ENCODE measurements at regions of chr4 and their contacts with region 1.

Region 1: GRCh38 chr4:165355900-165356300 is 22.9 kb upstream of the CPE start:
- DNase-seq: peak in 1 of 2 experiments; percentile 12
- H3K4me3 ChIP-seq: no peak overlapping the region
- H3K4me3 Mint-ChIP-seq: no peak overlapping the region
- H3K27ac Mint-ChIP-seq: no peak overlapping the region
- H3K4me1 ChIP-seq: no peaks in the 10 kb centered on the region
- H3K4me1 Mint-ChIP-seq: no peaks in the 10 kb centered on the region
- H3K27me3 ChIP-seq: no peaks in the 10 kb centered on the region
- H3K27me3 Mint-ChIP-seq: peaks cover 3% of the 10 kb centered on the region
- CTCF ChIP-seq: peak; percentile 44

Region 2: DNA sequence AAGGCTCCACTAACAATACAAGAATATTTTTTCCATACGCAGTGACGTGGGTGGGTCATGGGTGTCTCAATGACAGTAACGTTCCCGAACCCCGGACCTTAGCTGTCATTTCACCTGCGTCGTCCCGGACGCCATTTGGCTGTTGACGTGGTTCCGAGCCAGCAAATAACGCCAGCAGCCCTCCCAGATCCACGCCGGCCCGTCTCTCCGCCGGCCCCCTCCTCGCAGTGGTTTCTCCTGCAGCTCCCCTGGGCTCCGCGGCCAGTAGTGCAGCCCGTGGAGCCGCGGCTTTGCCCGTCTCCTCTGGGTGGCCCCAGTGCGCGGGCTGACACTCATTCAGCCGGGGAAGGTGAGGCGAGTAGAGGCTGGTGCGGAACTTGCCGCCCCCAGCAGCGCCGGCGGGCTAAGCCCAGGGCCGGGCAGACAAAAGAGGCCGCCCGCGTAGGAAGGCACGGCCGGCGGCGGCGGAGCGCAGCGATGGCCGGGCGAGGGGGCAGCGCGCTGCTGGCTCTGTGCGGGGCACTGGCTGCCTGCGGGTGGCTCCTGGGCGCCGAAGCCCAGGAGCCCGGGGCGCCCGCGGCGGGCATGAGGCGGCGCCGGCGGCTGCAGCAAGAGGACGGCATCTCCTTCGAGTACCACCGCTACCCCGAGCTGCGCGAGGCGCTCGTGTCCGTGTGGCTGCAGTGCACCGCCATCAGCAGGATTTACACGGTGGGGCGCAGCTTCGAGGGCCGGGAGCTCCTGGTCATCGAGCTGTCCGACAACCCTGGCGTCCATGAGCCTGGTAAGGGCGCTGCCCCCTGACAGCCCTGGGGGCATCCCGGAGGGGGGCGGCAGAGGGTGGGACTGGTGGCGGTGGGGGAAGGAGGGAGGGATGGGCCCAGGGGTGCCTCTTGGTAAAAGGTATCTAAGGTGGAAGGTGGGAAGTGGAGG is 23.1 kb after region 1 on chr4 and contains the start of gene CPE:
- CTCF ChIA-PET with region 1: no interaction called
- POLR2A ChIA-PET with region 1: no interaction called
- intact Hi-C with region 1: loop called (anchors 2 kb)
- DNase-seq: peak; percentile 81 to 87
- H3K4me3 ChIP-seq: peak within 1 kb of the TSS; percentile 37
- H3K4me3 Mint-ChIP-seq: peak within 1 kb of the TSS; percentile 87
- H3K27ac Mint-ChIP-seq: no peak within 1 kb of the TSS
- H3K4me1 ChIP-seq: peaks cover 5% of the 10 kb centered on the region
- H3K4me1 Mint-ChIP-seq: peaks cover 7% of the 10 kb centered on the region
- H3K27me3 ChIP-seq: no peaks in the 10 kb centered on the region
- H3K27me3 Mint-ChIP-seq: peaks cover 19% of the 10 kb centered on the region
- CTCF ChIP-seq: peak in 1 of 2 experiments; percentile 73
- total RNA-seq, gene CPE: 4.6 and 5.9 TPM in 2 replicates

Region 3: DNA sequence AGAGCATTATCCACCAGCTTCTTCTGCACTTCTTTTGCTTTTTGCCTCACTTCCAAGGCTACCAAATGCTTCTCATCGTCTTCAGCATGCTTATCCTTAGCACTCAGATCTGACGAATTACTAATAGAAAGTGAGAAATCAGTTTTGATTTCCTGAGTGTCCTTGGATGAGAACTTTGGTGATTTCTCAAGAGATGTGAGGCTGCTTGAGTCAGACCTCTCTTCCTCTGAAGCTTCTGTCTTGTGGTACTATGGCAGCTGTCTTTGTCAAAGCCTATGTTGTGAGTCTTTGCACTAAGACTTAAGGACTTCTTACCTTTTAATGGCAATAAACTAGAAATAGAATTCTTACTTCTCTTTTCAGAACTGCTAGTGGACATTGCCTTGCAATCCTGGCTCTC is 192.8 kb after region 1 on chr4:
- CTCF ChIA-PET with region 1: no interaction called
- POLR2A ChIA-PET with region 1: no interaction called
- intact Hi-C with region 1: no loop called
- DNase-seq: no peak
- H3K4me3 ChIP-seq: no peak overlapping the region
- H3K4me3 Mint-ChIP-seq: no peak overlapping the region
- H3K27ac Mint-ChIP-seq: no peak overlapping the region
- H3K4me1 ChIP-seq: no peaks in the 10 kb centered on the region
- H3K4me1 Mint-ChIP-seq: peaks cover 10% of the 10 kb centered on the region
- H3K27me3 ChIP-seq: no peaks in the 10 kb centered on the region
- H3K27me3 Mint-ChIP-seq: peaks cover 8% of the 10 kb centered on the region
- CTCF ChIP-seq: no peak